Natural killer cell (primary cell): ENCODE measurements at regions of chr5 and their contacts with region 1.

Region 1: GRCh38 chr5:40437452-40437861 is 242.3 kb upstream of the PTGER4 start:
- DNase-seq: peak in 1 of 2 donors; percentile 72
- ATAC-seq: peak; percentile 75 to 93 (median 79)
- H3K4me3 ChIP-seq: no peak overlapping the region
- H3K4me3 Mint-ChIP-seq: peak overlapping the region; percentile 83
- H3K27ac ChIP-seq: peak overlapping the region; percentile 93
- H3K27ac Mint-ChIP-seq: peak overlapping the region; percentile 90 to 95
- H3K4me1 ChIP-seq: peaks cover 59% of the 10 kb centered on the region
- H3K4me1 Mint-ChIP-seq: peaks cover 81 to 83% of the 10 kb centered on the region in 2 donors
- H3K27me3 ChIP-seq: no peaks in the 10 kb centered on the region
- H3K27me3 Mint-ChIP-seq: no peaks in the 10 kb centered on the region
- CTCF ChIP-seq: no peak

Region 2: DNA sequence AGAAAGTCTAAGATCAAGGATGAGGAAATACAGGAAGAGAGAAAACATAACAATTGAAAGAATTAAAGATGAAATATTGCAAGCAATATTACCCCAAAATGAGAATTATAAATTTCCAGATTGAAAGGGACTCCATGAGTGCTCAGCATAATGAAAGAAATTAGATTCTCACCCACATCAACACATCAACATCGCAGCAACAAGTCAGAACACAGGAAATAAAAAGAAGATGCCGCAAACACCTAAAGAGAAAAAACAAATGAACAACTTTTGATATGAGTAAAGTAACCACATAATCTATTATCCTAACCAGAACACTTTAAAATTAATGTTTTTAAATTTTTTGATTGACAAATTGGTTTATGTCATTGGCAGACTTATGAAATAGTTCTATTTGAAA is 76.1 kb before region 1 on chr5:
- intact Hi-C with region 1: loop called (anchors 2 kb)
- DNase-seq: peak in 1 of 2 donors; percentile 65
- ATAC-seq: peak; percentile 83 to 94 (median 87)
- H3K4me3 ChIP-seq: peak overlapping the region; percentile 13
- H3K4me3 Mint-ChIP-seq: peak overlapping the region; percentile 87
- H3K27ac ChIP-seq: peak overlapping the region; percentile 61
- H3K27ac Mint-ChIP-seq: peak overlapping the region; percentile 71 to 90
- H3K4me1 ChIP-seq: peaks cover 9% of the 10 kb centered on the region
- H3K4me1 Mint-ChIP-seq: peaks cover 65 to 74% of the 10 kb centered on the region in 2 donors
- H3K27me3 ChIP-seq: no peaks in the 10 kb centered on the region
- H3K27me3 Mint-ChIP-seq: no peaks in the 10 kb centered on the region
- CTCF ChIP-seq: no peak

Region 3: GRCh38 chr5:40404613-40405012 is 32.8 kb before region 1 on chr5:
- intact Hi-C with region 1: loop called (anchors 5 kb)
- DNase-seq: peak in 1 of 2 donors; percentile 72
- ATAC-seq: peak; percentile 68 to 79 (median 77)
- H3K4me3 ChIP-seq: no peak overlapping the region
- H3K4me3 Mint-ChIP-seq: peak overlapping the region; percentile 47
- H3K27ac ChIP-seq: peak overlapping the region; percentile 87
- H3K27ac Mint-ChIP-seq: peak overlapping the region; percentile 88 to 95
- H3K4me1 ChIP-seq: peaks cover 28% of the 10 kb centered on the region
- H3K4me1 Mint-ChIP-seq: peaks cover 70 to 74% of the 10 kb centered on the region in 2 donors
- H3K27me3 ChIP-seq: no peaks in the 10 kb centered on the region
- H3K27me3 Mint-ChIP-seq: no peaks in the 10 kb centered on the region
- CTCF ChIP-seq: no peak

Region 4: DNA sequence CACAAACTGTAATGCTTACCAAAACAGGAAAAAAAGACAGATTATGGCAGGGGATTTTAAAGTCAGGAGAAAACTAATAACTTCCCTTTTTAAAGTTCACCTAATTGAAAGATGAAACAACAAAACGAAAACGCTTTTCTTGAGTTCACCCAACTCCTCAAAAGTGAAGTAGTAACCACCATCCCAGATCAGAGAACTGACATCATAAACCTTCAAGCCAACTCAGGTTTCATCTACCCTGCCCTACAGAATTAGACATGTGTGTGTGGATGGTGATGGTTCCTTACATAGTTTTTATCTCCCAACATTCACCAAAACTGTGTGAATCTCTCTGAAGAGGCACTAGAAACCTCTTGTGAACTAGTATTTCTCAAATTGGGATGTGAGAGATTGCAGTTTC is 47.0 kb after region 1 on chr5:
- intact Hi-C with region 1: loop called (anchors 5 kb)
- DNase-seq: peak in 1 of 2 donors; percentile 28
- ATAC-seq: no peak
- H3K4me3 ChIP-seq: no peak overlapping the region
- H3K4me3 Mint-ChIP-seq: no peak overlapping the region
- H3K27ac ChIP-seq: no peak overlapping the region
- H3K27ac Mint-ChIP-seq: peak overlapping the region in 1 of 2 donors; percentile 35
- H3K4me1 ChIP-seq: peaks cover 10% of the 10 kb centered on the region
- H3K4me1 Mint-ChIP-seq: peaks cover 37 to 46% of the 10 kb centered on the region in 2 donors
- H3K27me3 ChIP-seq: no peaks in the 10 kb centered on the region
- H3K27me3 Mint-ChIP-seq: no peaks in the 10 kb centered on the region
- CTCF ChIP-seq: no peak